Activated T-helper 1 cell treated with anti-CD3 and anti-CD28 coated beads, Interleukin-12 subunit alpha, Interleukin-12 subunit beta, Interleukin-2, Interleukin-4 antibody, amounts not matched to agents 30 ng/mL and 10 ng/mL and 1 ng/mL, durations not matched to agents 14 hours and 24 hours and 36 hours (primary cell): ENCODE measurements at regions of chr3 and their contacts with region 1.

Region 1: DNA sequence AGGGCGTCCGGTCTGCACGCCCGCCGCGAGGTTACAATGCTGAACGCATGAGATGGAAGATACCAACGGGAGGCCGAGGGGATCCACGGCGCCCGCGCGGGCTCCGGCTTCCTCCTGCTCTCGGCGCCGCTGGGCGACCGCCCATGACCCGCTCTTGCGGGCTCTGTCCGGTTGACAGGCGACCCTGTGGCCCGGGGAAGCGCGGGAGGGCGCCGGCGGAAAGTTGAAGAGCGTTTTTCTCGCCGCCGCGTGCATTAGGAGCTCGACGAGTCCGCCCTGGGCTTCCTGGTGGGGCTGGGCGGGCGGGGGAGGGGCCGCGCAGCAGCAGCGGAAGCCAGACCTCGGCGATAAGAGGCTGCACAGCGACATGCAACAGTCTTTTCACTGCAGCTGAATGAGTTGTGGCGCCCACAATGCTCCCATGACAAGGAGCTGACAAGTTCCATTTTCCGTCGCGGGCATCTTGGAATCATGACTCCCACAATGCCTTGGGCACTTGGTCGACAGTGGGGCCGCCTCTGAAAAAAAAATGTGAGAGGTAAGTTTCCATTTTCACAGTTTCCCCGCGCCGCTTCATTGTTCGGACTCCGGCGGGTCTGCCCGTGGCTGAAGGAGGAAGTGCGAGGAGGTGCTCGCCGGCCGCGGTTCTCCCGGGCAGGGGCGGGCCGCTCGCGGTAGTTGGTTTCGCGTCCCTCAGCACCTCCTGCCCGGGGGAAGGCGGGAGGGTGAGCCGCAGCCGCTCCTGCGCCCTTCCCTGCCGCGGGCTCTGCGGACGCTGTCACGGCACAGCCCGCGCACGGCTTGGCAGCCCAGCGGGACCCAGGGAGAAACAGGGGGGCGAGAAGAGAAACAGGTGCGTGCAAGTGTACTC is at the start of gene MBNL1:
- DNase-seq: peak; percentile 81
- H3K4me3 Mint-ChIP-seq: peak within 1 kb of the TSS; percentile 90
- H3K27ac Mint-ChIP-seq: peak within 1 kb of the TSS; percentile 94
- H3K4me1 Mint-ChIP-seq: peaks cover 74% of the 10 kb centered on the region
- H3K27me3 Mint-ChIP-seq: no peaks in the 10 kb centered on the region
- total RNA-seq, gene MBNL1: 295 and 308 TPM in 2 replicates

Region 2: DNA sequence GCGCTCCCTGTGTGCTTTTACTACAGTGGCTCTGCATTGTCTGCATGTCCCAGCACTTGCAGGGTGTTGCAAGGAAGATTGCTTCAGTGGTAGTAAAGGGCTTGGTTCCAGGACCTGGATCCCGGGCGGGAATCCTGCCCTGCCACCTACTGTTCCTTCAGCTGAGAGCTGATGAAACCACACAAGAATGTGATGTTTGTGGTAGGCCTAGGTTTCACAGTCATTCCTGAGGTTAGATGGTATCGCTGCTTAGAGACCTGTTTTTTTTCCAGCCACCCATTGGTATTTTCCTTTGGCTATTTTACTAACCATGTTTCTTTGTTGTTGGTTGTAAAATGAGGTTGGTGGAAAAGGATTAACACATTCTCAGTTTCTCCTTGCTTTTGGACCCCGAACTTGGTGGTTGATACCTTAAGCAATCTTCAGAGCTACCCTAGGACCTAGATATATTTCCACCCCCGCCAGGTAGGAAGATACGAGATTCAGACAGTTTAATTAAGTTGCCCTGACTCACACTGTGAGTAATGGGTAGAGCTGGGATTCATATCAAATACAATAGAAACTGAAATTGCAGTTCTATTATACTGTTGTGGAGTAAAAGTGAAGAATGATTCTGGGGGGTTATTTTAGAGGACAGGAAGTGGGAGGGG is 963.6 kb before region 1 on chr3:
- intact Hi-C with region 1: loop called (anchors 10 kb)
- DNase-seq: no peak
- H3K4me3 Mint-ChIP-seq: peak overlapping the region; percentile 5
- H3K27ac Mint-ChIP-seq: peak overlapping the region; percentile 70
- H3K4me1 Mint-ChIP-seq: peaks cover 63% of the 10 kb centered on the region
- H3K27me3 Mint-ChIP-seq: peaks cover 3% of the 10 kb centered on the region

Region 3: DNA sequence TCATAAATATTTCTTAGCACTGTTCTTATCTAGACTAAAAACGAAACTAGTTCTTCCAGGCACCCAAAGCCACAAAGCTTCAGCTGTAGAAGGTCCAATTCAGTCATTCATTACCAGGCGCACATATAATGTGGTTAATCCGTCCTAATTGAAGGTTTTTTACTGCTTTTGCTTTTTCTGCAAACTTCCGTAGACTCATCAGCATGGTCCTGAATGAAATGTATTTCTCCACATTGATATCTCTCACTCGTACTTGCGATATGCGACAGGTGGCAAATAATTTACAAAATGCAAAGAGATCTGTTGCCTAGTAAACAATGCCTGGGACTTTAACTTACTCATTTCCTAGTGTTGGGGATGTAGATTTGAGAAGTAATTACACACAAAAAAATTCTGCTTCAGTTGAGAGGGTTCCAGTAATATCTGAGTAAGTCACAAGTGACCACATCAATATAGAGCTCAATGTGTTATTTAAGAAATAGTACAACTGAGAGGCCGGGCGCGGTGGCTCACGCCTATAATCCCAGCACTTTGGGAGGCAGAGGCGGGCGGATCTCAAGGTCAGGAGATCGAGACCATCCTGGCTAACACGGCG is 75.0 kb before region 1 on chr3:
- intact Hi-C with region 1: loop called (anchors 1 kb)
- DNase-seq: no peak
- H3K4me3 Mint-ChIP-seq: peak overlapping the region; percentile 71
- H3K27ac Mint-ChIP-seq: peak overlapping the region; percentile 87
- H3K4me1 Mint-ChIP-seq: peaks cover 87% of the 10 kb centered on the region
- H3K27me3 Mint-ChIP-seq: no peaks in the 10 kb centered on the region

Region 4: GRCh38 chr3:152241142-152242017 is 27.4 kb before region 1 on chr3:
- intact Hi-C with region 1: loop called (anchors 1 kb)
- DNase-seq: no peak
- H3K4me3 Mint-ChIP-seq: peak overlapping the region; percentile 57
- H3K27ac Mint-ChIP-seq: peak overlapping the region; percentile 70
- H3K4me1 Mint-ChIP-seq: peaks cover 81% of the 10 kb centered on the region
- H3K27me3 Mint-ChIP-seq: no peaks in the 10 kb centered on the region

Region 5: DNA sequence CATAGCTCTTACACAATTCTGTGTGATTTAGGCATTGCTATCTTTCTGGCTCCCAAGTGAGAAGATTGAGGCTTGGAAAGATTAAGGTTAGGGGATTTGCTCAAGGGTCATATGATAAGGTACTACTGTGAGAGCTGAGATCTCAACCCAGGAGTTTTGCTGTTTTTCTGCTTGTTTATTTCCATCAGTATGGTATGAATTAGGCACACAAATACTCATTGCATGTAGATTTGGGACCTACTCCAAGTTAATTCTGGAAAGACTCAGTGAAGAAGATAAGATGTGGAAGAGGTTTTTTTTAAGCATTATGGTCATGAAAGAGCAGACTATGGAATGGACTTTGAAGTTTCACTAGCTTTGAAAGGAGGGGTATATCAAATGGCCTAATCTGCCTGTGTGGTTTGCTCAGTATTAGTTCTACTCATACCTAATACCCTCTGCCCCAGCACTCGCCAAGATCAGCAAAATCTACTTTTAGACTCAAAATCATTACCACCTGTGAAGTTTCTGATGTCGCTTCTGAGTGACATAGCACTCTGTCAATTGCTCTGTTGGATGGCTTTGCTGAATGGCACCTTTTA is 12.4 kb after region 1 on chr3:
- intact Hi-C with region 1: loop called (anchors 1 kb)
- DNase-seq: no peak
- H3K4me3 Mint-ChIP-seq: peak overlapping the region; percentile 64
- H3K27ac Mint-ChIP-seq: peak overlapping the region; percentile 87
- H3K4me1 Mint-ChIP-seq: peaks cover 85% of the 10 kb centered on the region
- H3K27me3 Mint-ChIP-seq: no peaks in the 10 kb centered on the region

Region 6: DNA sequence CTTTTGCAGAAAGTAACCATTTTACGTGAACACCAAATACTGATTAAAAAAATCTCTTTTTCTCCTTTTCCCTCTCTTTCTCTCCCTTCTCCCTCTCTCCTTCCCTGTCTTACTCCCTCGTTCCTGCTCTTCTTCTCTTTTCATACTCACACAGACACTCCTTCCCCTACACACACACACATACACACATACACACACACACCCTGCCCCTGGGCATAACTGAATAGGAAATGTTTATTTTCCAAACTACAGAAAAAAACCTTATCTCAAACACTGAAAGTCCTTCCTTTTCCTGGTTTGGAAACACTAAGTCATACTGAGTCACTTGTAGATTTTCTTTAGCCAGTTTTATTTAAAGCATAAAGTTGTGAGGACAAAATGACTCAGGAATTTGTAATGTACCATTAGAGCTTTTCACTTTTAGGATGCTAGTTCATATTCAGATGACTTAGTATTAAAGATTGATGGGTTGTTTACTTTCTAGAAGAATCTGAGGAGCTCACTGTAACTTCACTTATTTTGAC is 62.3 kb after region 1 on chr3:
- intact Hi-C with region 1: loop called (anchors 2 kb)
- DNase-seq: no peak
- H3K4me3 Mint-ChIP-seq: peak overlapping the region; percentile 12
- H3K27ac Mint-ChIP-seq: peak overlapping the region; percentile 86
- H3K4me1 Mint-ChIP-seq: peaks cover 83% of the 10 kb centered on the region
- H3K27me3 Mint-ChIP-seq: no peaks in the 10 kb centered on the region

Region 7: GRCh38 chr3:152385761-152386160 is 117.0 kb after region 1 on chr3:
- intact Hi-C with region 1: no loop called
- DNase-seq: no peak
- H3K4me3 Mint-ChIP-seq: no peak overlapping the region
- H3K27ac Mint-ChIP-seq: peak overlapping the region; percentile 18
- H3K4me1 Mint-ChIP-seq: peaks cover 68% of the 10 kb centered on the region
- H3K27me3 Mint-ChIP-seq: no peaks in the 10 kb centered on the region

Region 8: GRCh38 chr3:152466784-152467183 is 198.0 kb after region 1 on chr3:
- intact Hi-C with region 1: no loop called
- DNase-seq: no peak
- H3K4me3 Mint-ChIP-seq: no peak overlapping the region
- H3K27ac Mint-ChIP-seq: no peak overlapping the region
- H3K4me1 Mint-ChIP-seq: peaks cover 6% of the 10 kb centered on the region
- H3K27me3 Mint-ChIP-seq: no peaks in the 10 kb centered on the region

Region 9: GRCh38 chr3:152539191-152539768 is 270.5 kb after region 1 on chr3:
- intact Hi-C with region 1: no loop called
- DNase-seq: no peak
- H3K4me3 Mint-ChIP-seq: no peak overlapping the region
- H3K27ac Mint-ChIP-seq: no peak overlapping the region
- H3K4me1 Mint-ChIP-seq: peaks cover 5% of the 10 kb centered on the region
- H3K27me3 Mint-ChIP-seq: peaks cover 15% of the 10 kb centered on the region

Region 10: GRCh38 chr3:152688313-152688712 is 419.5 kb after region 1 on chr3:
- intact Hi-C with region 1: no loop called
- DNase-seq: no peak
- H3K4me3 Mint-ChIP-seq: no peak overlapping the region
- H3K27ac Mint-ChIP-seq: no peak overlapping the region
- H3K4me1 Mint-ChIP-seq: peaks cover 7% of the 10 kb centered on the region
- H3K27me3 Mint-ChIP-seq: peaks cover 2% of the 10 kb centered on the region